ENCODE measurements at regions of chr19 and their contacts with region 1.

Region 1: GRCh38 chr19:45306518-45307027 is 16.1 kb downstream of the CKM start:
- DNase-seq: no peak

Region 2: GRCh38 chr19:45234089-45234869 is 72.3 kb before region 1 on chr19:
- in situ Hi-C with region 1: loop called (anchors 5 kb)
- DNase-seq: no peak

Region 3: GRCh38 chr19:45419396-45419795 is 112.8 kb after region 1 on chr19:
- in situ Hi-C with region 1: no loop called
- DNase-seq: peak; percentile 20